Aorta (tissue), 5 donors: ENCODE measurements at regions of chr4 and their contacts with region 1.

Region 1: DNA sequence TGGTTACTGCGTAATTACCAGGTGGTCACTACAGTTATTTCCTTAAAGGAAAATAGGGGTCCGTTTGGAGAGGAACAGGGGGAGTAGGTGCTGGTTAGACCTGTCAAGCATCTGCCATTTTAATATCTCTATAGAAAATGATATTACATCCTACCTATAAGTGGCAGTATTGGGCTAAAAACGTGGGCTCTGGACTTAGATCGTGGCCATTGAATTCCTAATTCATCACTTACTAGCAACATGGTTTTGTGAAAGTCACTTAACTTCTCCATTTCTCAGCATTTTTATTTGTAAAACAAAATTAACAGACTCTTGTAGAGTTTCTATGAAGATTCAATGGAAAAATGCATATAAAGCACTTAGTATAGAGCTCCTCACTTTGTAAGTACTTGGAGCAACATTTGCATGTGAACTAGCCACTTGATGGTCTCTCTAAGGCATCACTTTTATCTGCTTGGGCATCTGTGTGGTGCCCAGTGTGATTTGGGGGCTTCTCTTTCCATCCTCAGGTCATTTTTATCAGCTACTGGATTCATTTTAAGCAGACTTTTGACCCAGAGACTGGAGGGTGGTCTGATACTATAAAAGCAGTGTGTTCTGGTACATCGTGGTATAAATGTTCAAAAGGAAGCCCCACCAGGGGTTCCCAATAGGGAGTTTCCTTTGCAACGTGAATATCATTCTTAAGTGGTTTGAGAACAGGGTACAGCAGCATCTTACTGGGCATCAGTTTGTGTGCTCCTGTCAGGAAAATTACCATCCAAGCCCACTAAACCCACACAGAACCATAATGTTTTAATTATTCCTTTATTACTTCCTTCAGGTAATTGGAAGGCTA is 42.7 kb upstream of the RASSF6 start:
- DNase-seq: no peak
- ATAC-seq: no peak
- H3K4me3 ChIP-seq: no peak overlapping the region
- H3K27ac ChIP-seq: no peak overlapping the region
- H3K4me1 ChIP-seq: no peaks in the 10 kb centered on the region
- H3K27me3 ChIP-seq: no peaks in the 10 kb centered on the region

Region 2: DNA sequence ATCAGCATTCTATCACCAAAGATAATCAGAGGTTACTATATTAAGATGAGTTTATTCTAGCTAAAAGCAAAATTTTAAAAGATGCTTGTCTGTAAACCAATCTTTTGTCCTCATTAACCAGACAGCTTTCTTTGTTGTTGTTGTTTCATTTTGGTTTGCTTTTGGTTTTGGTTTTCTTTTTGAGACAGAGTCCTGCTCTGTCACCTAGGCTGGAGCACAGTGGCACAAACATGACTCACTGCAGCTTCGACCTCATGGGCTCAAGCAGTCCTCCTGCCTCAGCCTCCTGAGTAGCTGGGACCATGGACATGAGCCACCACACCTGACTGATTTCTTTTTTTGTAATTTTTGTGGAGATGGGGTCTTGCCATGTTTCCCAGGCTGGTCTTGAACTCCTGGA is 696.3 kb before region 1 on chr4:
- intact Hi-C with region 1: no loop called
- DNase-seq: no peak
- ATAC-seq: no peak
- H3K4me3 ChIP-seq: no peak overlapping the region
- H3K27ac ChIP-seq: peak overlapping the region in 1 of 2 donors; percentile 17
- H3K4me1 ChIP-seq: no peaks in the 10 kb centered on the region
- H3K27me3 ChIP-seq: no peaks in the 10 kb centered on the region

Region 3: GRCh38 chr4:73729534-73730165 is 66.7 kb after region 1 on chr4:
- intact Hi-C with region 1: loop called in 1 of 2 experiments (anchors 10 kb)
- DNase-seq: peak in 1 of 2 donors; percentile 77
- ATAC-seq: peak; percentile 89
- H3K4me3 ChIP-seq: no peak overlapping the region
- H3K27ac ChIP-seq: no peak overlapping the region
- H3K4me1 ChIP-seq: peaks cover 0 to 4% of the 10 kb centered on the region in 2 donors
- H3K27me3 ChIP-seq: no peaks in the 10 kb centered on the region

Region 4: GRCh38 chr4:73922766-73923630 is 260.1 kb after region 1 on chr4:
- intact Hi-C with region 1: loop called (anchors 5 to 10 kb)
- DNase-seq: no peak
- ATAC-seq: no peak
- H3K4me3 ChIP-seq: no peak overlapping the region
- H3K27ac ChIP-seq: no peak overlapping the region
- H3K4me1 ChIP-seq: no peaks in the 10 kb centered on the region
- H3K27me3 ChIP-seq: no peaks in the 10 kb centered on the region